ENCODE measurements at regions of chr2 and their contacts with region 1.

Region 1: DNA sequence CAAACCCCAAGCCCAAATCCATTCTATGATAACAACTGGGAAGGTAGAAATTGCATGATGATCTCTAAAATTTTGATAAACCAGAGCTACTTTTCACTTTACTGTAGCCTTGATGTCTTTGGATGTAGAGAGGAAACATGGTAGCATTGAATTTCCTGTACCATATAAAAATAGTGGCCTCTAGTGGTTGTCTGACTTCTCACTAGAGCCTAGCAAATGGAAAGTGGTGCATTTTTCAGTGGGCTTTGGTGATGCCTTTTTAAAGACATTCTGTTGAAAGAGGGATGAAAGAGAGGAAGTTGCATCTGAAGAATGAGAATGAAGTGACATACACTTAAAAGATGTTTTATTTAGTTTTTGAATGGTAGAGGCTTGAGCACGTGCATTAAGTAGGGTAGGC is 662.2 kb downstream of the XIRP2 start:
- DNase-seq: peak in 1 of 2 experiments; percentile 14
- H3K4me3 ChIP-seq: no peak overlapping the region
- H3K4me3 Mint-ChIP-seq: no peak overlapping the region
- H3K27ac Mint-ChIP-seq: no peak overlapping the region
- H3K4me1 ChIP-seq: no peaks in the 10 kb centered on the region
- H3K4me1 Mint-ChIP-seq: no peaks in the 10 kb centered on the region
- H3K27me3 ChIP-seq: no peaks in the 10 kb centered on the region
- H3K27me3 Mint-ChIP-seq: peaks cover 3% of the 10 kb centered on the region
- CTCF ChIP-seq: peak; percentile 38 to 46

Region 2: DNA sequence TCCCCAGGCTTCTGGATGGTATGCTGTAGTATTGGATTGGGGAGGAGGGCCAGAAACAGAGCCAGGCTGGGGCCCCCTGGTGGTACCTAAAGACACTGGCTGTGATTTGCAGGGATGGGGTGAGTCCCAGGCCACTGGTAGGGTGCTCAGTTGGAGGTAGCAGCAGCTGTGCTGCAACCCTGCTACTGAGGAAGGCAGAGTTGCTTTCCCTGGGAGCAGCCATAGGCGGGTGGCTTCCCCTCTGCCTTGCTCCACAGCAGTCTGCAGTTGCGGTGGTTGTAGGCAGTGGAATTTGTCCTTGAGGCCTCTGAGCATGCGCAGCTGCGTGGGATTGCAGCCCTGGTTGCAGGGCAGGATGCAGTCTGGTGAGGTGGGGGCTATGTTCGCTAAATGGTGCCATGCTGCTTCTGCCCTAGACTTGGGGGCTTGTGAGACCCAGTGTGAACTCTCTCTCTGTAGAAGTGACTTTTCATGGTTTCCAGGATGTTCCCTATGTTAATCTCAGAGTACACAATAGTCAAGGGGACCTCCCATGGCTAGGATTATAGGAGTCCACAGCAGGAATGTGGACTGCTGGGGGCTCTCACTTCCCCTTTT is 218.7 kb before region 1 on chr2:
- CTCF ChIA-PET with region 1: no interaction called
- POLR2A ChIA-PET with region 1: no interaction called
- intact Hi-C with region 1: loop called (anchors 1 kb)
- DNase-seq: peak; percentile 32 to 41
- H3K4me3 ChIP-seq: no peak overlapping the region
- H3K4me3 Mint-ChIP-seq: no peak overlapping the region
- H3K27ac Mint-ChIP-seq: no peak overlapping the region
- H3K4me1 ChIP-seq: no peaks in the 10 kb centered on the region
- H3K4me1 Mint-ChIP-seq: no peaks in the 10 kb centered on the region
- H3K27me3 ChIP-seq: no peaks in the 10 kb centered on the region
- H3K27me3 Mint-ChIP-seq: peaks cover 2% of the 10 kb centered on the region
- CTCF ChIP-seq: peak in 1 of 2 experiments; percentile 35

Region 3: DNA sequence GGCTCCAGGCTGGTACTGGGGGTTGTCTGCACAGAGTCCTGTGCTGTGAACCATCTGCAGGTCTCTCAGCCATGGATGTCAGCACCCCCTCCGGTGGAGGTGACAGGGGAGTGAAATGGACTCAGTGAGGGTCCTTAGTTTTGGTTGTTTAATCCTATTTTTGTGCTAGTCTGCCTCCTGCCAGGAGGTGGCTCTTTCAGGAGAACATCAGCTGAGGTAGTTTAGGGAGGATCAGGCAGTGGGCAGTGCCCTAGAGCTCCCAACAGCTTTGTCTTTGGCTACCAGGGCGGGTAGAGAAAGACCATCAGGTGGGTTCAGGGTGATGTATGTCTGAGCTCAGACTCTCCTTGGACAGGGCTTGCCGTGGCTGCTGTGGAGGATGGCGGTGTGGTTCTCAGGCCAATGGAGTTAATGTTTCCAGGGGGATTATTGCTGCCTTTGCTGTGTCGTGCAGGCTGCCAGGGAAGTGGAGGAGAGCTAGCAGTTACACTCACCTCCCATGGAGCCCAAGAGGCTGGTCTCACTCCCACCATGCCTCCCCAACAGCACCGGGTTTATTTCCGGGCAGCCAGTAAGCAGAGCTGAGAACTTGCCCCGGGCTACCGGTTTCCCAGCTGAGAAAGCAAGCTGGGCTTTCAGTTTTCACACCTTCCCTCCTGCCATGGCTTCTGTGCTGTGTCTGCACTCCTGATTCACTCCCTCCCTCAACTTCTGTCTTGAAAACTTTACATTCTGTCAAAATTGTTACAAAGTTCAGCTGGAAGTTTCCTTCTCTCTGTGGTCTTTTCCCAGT is 98.8 kb before region 1 on chr2:
- CTCF ChIA-PET with region 1: no interaction called
- POLR2A ChIA-PET with region 1: no interaction called
- intact Hi-C with region 1: loop called (anchors 2 kb)
- DNase-seq: no peak
- H3K4me3 ChIP-seq: no peak overlapping the region
- H3K4me3 Mint-ChIP-seq: no peak overlapping the region
- H3K27ac Mint-ChIP-seq: no peak overlapping the region
- H3K4me1 ChIP-seq: no peaks in the 10 kb centered on the region
- H3K4me1 Mint-ChIP-seq: no peaks in the 10 kb centered on the region
- H3K27me3 ChIP-seq: no peaks in the 10 kb centered on the region
- H3K27me3 Mint-ChIP-seq: no peaks in the 10 kb centered on the region
- CTCF ChIP-seq: no peak

Region 4: GRCh38 chr2:167626301-167626700 is 75.9 kb after region 1 on chr2:
- CTCF ChIA-PET with region 1: no interaction called
- POLR2A ChIA-PET with region 1: no interaction called
- intact Hi-C with region 1: no loop called
- DNase-seq: no peak
- H3K4me3 ChIP-seq: no peak overlapping the region
- H3K4me3 Mint-ChIP-seq: no peak overlapping the region
- H3K27ac Mint-ChIP-seq: no peak overlapping the region
- H3K4me1 ChIP-seq: no peaks in the 10 kb centered on the region
- H3K4me1 Mint-ChIP-seq: no peaks in the 10 kb centered on the region
- H3K27me3 ChIP-seq: no peaks in the 10 kb centered on the region
- H3K27me3 Mint-ChIP-seq: no peaks in the 10 kb centered on the region
- CTCF ChIP-seq: no peak